Tibial artery (tissue), 4 donors: ENCODE measurements at regions of chr10 and their contacts with region 1.

Region 1: DNA sequence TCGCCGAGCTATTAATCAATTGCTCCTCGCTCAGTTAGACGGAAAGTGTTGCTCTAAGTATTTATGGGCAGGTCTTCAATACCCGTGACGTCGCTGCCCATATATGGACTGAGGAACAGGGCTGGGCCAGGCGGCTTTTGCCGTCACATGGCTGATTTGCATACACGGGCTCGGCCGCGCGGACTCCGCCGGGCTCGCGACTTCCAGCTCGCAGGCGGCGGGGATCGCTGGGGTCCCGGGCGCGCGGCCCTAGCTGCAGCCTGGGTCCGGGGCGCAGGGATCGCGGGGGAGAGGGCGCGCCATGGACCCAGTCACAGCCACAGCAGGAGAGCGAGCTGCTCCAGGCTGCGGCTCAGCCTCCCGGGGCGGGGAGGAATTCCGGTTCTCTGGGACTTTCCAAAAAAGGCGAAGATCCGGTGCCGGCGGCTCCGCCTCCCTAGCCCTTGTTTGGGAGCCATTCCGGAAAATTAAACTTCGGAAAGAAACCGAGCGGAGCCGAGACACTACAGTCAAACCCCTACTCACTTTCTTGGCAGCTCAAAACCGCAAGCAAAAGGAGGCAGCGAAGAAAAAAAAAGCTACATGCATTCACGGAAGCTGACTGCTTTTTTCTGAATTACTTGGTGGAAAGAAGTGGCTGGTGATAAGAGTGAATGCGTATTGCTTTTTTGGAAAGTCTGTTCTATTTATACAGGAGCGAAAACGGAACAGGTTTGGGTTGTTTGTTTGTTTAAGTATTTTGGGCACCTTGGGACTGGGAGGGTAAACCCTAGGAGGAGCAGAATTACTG is at the start of gene EGR2:
- DNase-seq: peak; percentile 94 to 97
- H3K4me3 ChIP-seq: peak within 1 kb of the TSS; percentile 66 to 70
- H3K27ac ChIP-seq: peak within 1 kb of the TSS; percentile 72 to 74
- H3K4me1 ChIP-seq: peaks cover 0 to 51% (median 38%) of the 10 kb centered on the region in 4 donors
- H3K27me3 ChIP-seq: peaks cover 0 to 30% of the 10 kb centered on the region in 2 donors
- CTCF ChIP-seq: no peak

Region 2: GRCh38 chr10:62443866-62444265 is 372.7 kb before region 1 on chr10:
- intact Hi-C with region 1: loop called (anchors 10 kb)
- DNase-seq: no peak
- H3K4me3 ChIP-seq: no peak overlapping the region
- H3K27ac ChIP-seq: no peak overlapping the region
- H3K4me1 ChIP-seq: peaks cover 0 to 28% (median 12%) of the 10 kb centered on the region in 4 donors
- H3K27me3 ChIP-seq: no peaks in the 10 kb centered on the region
- CTCF ChIP-seq: no peak

Region 3: GRCh38 chr10:62707810-62708209 is 108.7 kb before region 1 on chr10:
- intact Hi-C with region 1: no loop called
- DNase-seq: no peak
- H3K4me3 ChIP-seq: no peak overlapping the region
- H3K27ac ChIP-seq: no peak overlapping the region
- H3K4me1 ChIP-seq: no peaks in the 10 kb centered on the region
- H3K27me3 ChIP-seq: no peaks in the 10 kb centered on the region
- CTCF ChIP-seq: no peak

Region 4: DNA sequence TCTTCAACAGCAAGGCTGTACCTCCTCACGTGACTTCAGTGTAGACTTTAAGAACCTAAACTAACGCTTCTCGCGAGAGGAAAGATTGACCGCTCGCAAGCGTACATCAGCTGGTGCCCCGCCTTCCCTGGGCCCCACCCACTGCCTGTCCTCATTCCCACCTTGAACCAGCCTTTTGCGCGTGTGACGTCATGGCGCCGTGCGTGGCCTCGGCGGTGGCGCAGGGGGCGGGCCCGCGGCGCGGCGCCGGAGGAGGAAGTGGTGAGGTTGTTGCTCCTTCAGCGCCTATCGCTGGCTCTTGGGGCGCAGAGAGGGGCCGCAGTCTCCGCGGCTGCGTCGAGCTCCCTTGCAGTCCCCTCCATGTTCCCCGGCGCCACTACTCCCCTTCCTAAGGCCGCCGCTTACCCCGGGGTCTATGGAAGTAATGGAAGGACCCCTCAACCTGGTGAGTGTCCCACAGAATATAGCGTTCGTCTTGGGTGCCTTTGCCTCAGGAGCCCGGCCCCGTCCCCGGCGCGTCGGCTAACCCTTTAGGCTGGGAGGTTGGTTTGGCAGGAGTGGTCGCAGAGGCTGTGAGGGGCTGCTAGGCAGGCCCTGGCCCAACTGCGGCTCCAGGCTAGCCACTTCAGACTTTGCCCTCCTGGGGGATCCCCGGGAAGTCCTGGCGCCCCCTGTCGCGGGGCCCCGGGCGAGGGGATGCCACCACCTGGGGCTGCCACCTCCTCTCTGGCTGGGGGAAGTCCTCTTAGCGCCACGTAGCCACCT is 316.7 kb after region 1 on chr10 and contains the start of gene NRBF2:
- intact Hi-C with region 1: loop called (anchors 10 kb)
- DNase-seq: peak; percentile 96 to 98
- H3K4me3 ChIP-seq: peak within 1 kb of the TSS; percentile 84 to 96
- H3K27ac ChIP-seq: peak within 1 kb of the TSS; percentile 93
- H3K4me1 ChIP-seq: peaks cover 0 to 24% (median 16%) of the 10 kb centered on the region in 4 donors
- H3K27me3 ChIP-seq: no peaks in the 10 kb centered on the region
- CTCF ChIP-seq: no peak

Region 5: GRCh38 chr10:63157845-63158624 is 341.5 kb after region 1 on chr10:
- intact Hi-C with region 1: loop called (anchors 5 kb)
- DNase-seq: no peak
- H3K4me3 ChIP-seq: no peak overlapping the region
- H3K27ac ChIP-seq: no peak overlapping the region
- H3K4me1 ChIP-seq: no peaks in the 10 kb centered on the region
- H3K27me3 ChIP-seq: no peaks in the 10 kb centered on the region
- CTCF ChIP-seq: peak; percentile 69 to 82